ENCODE measurements at regions of chr1 and their contacts with region 1.

Region 1: GRCh38 chr1:170881268-170882265 is 53.8 kb upstream of the MROH9 start:
- DNase-seq: no peak
- ATAC-seq: peak; percentile 65

Region 2: GRCh38 chr1:169933984-169934725 is 947.4 kb before region 1 on chr1:
- intact Hi-C with region 1: loop called (anchors 5 kb)
- DNase-seq: no peak
- ATAC-seq: no peak

Region 3: DNA sequence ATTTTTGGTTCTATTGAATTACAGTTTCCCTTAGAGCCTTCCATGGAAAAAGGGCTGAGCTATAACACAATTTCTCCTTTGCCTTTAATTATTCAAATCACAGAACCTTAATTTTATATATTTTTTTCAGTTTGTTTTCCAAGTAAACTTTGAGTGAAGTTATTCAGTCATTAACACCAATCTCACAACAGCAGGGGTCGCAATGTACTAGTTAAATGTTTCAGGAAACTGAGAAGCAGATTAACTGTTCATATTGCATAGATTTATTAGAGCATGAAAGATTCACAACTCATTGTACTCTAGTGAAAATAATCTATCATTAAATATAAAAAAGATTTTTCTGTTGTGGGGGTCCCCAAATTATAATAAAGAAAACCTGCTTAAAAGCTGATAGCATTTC is 871.1 kb before region 1 on chr1:
- intact Hi-C with region 1: loop called (anchors 5 kb)
- DNase-seq: no peak
- ATAC-seq: no peak

Region 4: DNA sequence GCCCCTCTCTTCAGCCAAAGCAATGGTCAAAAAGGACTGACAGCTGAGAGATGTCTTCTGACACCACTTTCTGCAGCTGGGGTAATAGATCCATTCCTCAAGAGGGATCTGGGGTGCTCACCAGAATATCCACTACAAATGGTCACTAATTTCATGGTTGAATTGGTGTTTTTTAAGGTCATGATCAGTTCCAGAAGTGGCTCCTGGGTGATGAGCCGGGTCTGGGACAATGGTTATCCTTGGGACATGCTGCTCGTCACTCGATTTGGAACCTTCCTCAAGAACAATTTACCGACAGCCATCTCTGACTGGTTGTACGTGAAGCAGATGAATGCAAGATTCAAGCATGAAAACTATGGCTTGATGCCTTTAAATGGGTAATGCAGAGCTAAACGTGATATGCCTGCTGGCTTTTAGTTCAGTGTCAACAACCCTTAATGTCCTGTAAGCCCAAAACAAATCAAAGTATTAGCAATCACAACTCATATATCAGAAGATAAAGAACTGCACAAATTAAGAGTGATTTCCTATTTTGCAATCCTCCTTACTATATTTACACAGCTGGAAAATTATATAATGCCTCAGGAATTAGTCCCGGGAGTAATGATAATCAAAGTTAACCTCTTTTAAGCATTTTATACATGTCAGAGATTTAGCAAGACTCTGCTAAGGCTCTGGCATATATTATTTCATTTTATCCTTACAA is 229.2 kb after region 1 on chr1:
- intact Hi-C with region 1: no loop called
- DNase-seq: no peak
- ATAC-seq: peak; percentile 49

Measured in Right ventricle myocardium inferior (tissue), 1 donor.